MCF 10A (cell line): ENCODE measurements at regions of chr12 and their contacts with region 1.

Region 1: GRCh38 chr12:118377884-118378470 is 1.6 kb downstream of the SUDS3 start:
- DNase-seq: peak; percentile 70
- H3K4me3 Mint-ChIP-seq: peak overlapping the region; percentile 66
- H3K27ac Mint-ChIP-seq: peak overlapping the region; percentile 2
- H3K4me1 Mint-ChIP-seq: peaks cover 6% of the 10 kb centered on the region
- H3K27me3 Mint-ChIP-seq: no peaks in the 10 kb centered on the region
- CTCF ChIP-seq: peak; percentile 87

Region 2: DNA sequence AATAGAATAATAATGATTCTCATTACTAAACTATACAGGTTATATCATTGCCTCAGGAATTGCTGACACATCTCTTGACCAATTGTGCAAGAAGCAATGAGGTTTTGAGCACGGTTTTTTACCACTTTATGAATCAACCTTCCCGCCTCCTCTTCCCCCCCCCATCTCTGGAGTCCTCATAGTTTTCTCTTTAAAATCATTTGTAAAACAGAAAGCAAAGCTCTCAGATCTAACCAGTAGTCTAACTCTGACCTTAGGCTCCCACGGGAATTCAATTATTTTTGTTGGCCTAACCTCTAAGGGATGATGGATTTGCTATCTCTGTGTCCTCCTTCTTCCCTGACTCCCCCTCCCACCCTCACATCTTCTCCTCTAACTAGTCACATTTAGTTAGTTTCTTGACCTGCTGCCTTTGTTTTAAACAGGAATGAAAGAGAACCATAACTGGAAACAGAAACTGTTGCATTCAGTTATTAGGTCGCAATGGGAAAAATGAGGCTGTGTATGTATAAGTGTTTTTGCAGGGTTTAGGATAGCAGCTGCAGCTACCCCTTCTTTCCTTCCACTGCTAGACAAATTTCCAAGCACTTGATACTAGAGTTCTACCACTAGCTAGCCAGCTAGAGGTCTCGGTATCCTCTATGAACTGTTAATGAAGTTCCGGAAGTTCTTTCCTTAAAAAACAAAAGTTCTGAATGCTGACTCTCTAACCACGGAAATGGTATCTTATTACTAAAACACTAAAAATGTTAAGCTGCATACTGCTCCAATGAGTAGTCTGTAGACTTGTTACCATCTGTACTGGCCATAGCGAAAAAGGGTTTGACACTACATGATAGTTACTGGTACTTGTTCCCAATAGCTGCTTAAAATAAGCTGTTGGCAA is 70.7 kb before region 1 on chr12:
- CTCF ChIA-PET with region 1: interaction called, 11 read pairs
- POLR2A ChIA-PET with region 1: interaction called, 20 read pairs
- intact Hi-C with region 1: loop called (anchors 1 kb)
- DNase-seq: peak; percentile 90
- H3K4me3 Mint-ChIP-seq: peak overlapping the region; percentile 63
- H3K27ac Mint-ChIP-seq: peak overlapping the region; percentile 80
- H3K4me1 Mint-ChIP-seq: peaks cover 22% of the 10 kb centered on the region
- H3K27me3 Mint-ChIP-seq: no peaks in the 10 kb centered on the region
- CTCF ChIP-seq: no peak

Region 3: GRCh38 chr12:118391424-118391823 is 13.4 kb after region 1 on chr12:
- CTCF ChIA-PET with region 1: interaction called, 62 read pairs
- POLR2A ChIA-PET with region 1: interaction called, 5 read pairs
- intact Hi-C with region 1: no loop called
- DNase-seq: no peak
- H3K4me3 Mint-ChIP-seq: no peak overlapping the region
- H3K27ac Mint-ChIP-seq: no peak overlapping the region
- H3K4me1 Mint-ChIP-seq: no peaks in the 10 kb centered on the region
- H3K27me3 Mint-ChIP-seq: no peaks in the 10 kb centered on the region
- CTCF ChIP-seq: no peak

Region 4: DNA sequence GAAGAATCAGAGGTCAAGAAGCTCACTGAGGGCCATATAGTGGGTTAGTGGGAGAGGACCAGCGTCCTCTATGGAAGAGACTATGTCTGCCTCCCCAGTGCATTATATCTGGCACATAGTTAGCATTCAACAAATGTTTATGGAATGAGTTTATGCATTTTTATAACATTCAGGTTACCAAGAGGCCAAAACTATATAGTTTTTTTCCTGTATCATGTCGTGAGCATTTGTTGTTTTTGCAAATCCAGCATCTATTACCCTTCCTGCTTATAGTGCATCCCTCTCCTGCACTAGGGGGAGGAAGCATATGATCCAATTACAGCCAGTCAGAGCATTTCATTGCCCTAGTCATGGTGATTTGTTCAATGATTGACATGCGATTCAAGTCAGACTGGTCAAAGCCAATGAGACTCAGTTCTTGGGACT is 59.0 kb after region 1 on chr12:
- CTCF ChIA-PET with region 1: no interaction called
- POLR2A ChIA-PET with region 1: no interaction called
- intact Hi-C with region 1: no loop called
- DNase-seq: no peak
- H3K4me3 Mint-ChIP-seq: no peak overlapping the region
- H3K27ac Mint-ChIP-seq: no peak overlapping the region
- H3K4me1 Mint-ChIP-seq: no peaks in the 10 kb centered on the region
- H3K27me3 Mint-ChIP-seq: peaks cover 33% of the 10 kb centered on the region
- CTCF ChIP-seq: no peak